Cardiac septum (tissue), 1 donor: ENCODE measurements at regions of chr12 and their contacts with region 1.

Region 1: GRCh38 chr12:116015525-116015924 is 262.0 kb downstream of the MED13L start:
- DNase-seq: no peak

Region 2: DNA sequence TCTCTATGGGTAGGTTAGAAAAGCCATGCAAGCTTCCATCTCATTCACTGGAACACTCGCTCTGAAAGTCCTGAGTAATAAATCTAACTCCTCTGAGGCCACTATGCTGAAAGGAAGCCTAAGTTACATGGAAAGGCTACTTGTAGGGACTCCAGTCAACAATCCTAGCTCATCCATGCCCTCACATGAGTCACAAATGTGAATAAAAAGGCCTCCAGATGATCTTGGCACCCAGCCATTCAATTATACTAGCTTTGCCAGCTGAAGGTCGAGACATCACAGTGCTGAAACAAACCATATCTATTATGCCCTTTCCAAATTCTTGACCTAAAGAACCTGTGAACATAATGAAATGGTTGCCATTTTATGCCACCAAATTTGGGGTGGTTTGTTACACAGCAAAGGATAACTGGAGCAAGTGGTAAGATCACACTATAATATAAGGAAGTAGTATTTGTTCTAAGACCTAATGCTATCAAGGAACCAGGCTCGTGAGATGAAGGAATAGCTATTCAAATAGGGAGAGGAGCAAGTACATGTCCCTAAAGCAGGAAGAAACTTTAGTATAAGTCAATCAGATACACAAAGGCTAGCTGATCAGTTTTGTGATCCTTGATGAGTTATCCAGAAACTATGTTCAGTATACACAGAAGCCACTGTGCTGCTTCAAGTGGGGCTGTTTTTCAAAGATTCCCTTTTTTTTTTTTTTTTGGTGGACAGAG is 119.8 kb after region 1 on chr12:
- intact Hi-C with region 1: loop called (anchors 10 kb)
- DNase-seq: no peak

Region 3: DNA sequence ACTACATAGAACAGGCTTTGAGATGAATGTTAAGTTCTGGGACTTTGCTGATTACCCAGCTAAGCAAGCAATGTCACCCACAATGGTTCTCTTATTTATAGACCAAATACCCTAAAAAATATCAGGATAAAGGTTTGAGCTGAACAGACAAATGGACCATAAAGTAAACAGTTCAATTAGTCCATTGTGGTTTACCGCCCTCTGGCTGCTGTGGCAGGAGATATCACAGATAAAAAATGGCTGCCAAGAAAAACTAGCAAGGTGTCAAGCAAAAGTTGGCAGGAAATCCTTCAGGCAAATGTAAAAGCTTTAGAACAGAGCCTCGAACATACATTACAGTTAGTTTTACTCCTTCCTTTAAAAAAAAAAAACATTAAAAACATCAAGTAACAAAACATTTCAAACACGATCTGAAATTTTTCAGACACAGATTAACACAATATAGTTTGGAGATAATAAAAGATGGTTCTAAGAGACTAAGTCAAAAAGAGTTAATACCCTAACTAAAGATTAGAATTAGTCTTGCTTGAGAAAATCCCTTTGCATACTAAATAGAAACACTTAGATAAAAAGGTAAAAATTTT is 220.7 kb after region 1 on chr12:
- intact Hi-C with region 1: loop called (anchors 5 kb)
- DNase-seq: no peak

Region 4: GRCh38 chr12:116277393-116278278 is 262.1 kb after region 1 on chr12 and contains the start of gene MED13L:
- intact Hi-C with region 1: loop called (anchors 10 kb)
- DNase-seq: peak; percentile 96
- total RNA-seq, gene MED13L: 74.5 TPM

Region 5: DNA sequence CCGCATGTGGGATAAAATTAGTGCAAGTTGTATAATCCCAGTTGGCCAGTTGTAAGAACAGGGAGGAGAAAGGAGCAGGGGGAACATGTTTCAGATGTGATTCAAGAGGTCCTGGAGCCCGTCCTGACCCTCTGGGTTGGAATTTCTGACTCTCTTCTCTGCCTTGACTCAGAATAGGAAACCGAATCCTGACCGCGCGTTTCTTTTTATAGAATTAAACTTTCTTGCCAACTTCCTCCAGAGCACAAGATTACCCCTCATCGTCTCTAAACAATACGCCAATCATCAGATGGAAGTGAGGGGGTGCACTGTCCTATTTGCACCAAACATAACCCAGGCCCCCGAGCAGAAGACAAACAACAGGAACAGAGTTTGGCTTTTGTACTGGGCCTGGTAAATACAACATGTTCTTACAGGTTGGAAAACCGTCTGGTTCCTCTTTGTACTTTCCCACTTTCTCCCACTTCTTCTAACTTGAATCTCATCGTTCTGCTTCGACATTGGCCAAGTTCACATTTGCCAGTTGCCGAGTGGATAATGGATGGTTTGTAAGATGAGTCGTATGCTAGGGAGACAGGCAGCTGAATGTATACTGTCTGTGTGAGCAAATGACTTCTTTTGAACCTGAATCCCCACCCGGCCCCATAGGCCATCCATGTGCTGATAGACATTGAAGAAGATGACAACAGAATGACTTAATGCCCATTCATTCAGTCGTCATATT is 304.5 kb after region 1 on chr12:
- intact Hi-C with region 1: no loop called
- DNase-seq: peak; percentile 82